MCF 10A (cell line): ENCODE measurements at regions of chr2 and their contacts with region 1.

Region 1: GRCh38 chr2:191202881-191203397 is 42.3 kb upstream of the MYO1B start:
- DNase-seq: peak; percentile 69
- H3K4me3 Mint-ChIP-seq: peak overlapping the region; percentile 49
- H3K27ac Mint-ChIP-seq: peak overlapping the region; percentile 98
- H3K4me1 Mint-ChIP-seq: peaks cover 23% of the 10 kb centered on the region
- H3K27me3 Mint-ChIP-seq: no peaks in the 10 kb centered on the region
- CTCF ChIP-seq: no peak

Region 2: GRCh38 chr2:190180313-190181122 is 1022.4 kb before region 1 on chr2:
- CTCF ChIA-PET with region 1: no interaction called
- POLR2A ChIA-PET with region 1: no interaction called
- intact Hi-C with region 1: no loop called
- DNase-seq: no peak
- H3K4me3 Mint-ChIP-seq: no peak overlapping the region
- H3K27ac Mint-ChIP-seq: no peak overlapping the region
- H3K4me1 Mint-ChIP-seq: no peaks in the 10 kb centered on the region
- H3K27me3 Mint-ChIP-seq: no peaks in the 10 kb centered on the region
- CTCF ChIP-seq: no peak

Region 3: GRCh38 chr2:191171708-191172355 is 31.1 kb before region 1 on chr2:
- CTCF ChIA-PET with region 1: interaction called, 3 read pairs
- POLR2A ChIA-PET with region 1: interaction called, 89 read pairs
- intact Hi-C with region 1: loop called (anchors 2 kb)
- DNase-seq: peak; percentile 98
- H3K4me3 Mint-ChIP-seq: peak overlapping the region; percentile 33
- H3K27ac Mint-ChIP-seq: peak overlapping the region; percentile 79
- H3K4me1 Mint-ChIP-seq: peaks cover 61% of the 10 kb centered on the region
- H3K27me3 Mint-ChIP-seq: no peaks in the 10 kb centered on the region
- CTCF ChIP-seq: no peak

Region 4: GRCh38 chr2:191178806-191179514 is 24.0 kb before region 1 on chr2:
- CTCF ChIA-PET with region 1: interaction called, 3 read pairs
- POLR2A ChIA-PET with region 1: interaction called, 89 read pairs
- intact Hi-C with region 1: loop called (anchors 2 kb)
- DNase-seq: peak; percentile 100
- H3K4me3 Mint-ChIP-seq: peak overlapping the region; percentile 31
- H3K27ac Mint-ChIP-seq: peak overlapping the region; percentile 89
- H3K4me1 Mint-ChIP-seq: peaks cover 38% of the 10 kb centered on the region
- H3K27me3 Mint-ChIP-seq: no peaks in the 10 kb centered on the region
- CTCF ChIP-seq: no peak